ENCODE measurements at regions of chr10 and their contacts with region 1.

Region 1: GRCh38 chr10:31152421-31153135 is 120.9 kb upstream of the ZNF438 start:
- DNase-seq: no peak
- ATAC-seq: no peak
- H3K4me3 ChIP-seq: no peak overlapping the region
- H3K27ac ChIP-seq: no peak overlapping the region
- H3K4me1 ChIP-seq: no peaks in the 10 kb centered on the region
- H3K27me3 ChIP-seq: peaks cover 0 to 12% of the 10 kb centered on the region in 2 experiments; a peak in 2 of 5 replicates
- CTCF ChIP-seq: no peak
- EP300 ChIP-seq: no peak
- POLR2A ChIP-seq: no peak
- RAD21 ChIP-seq: no peak

Region 2: GRCh38 chr10:30893208-30893607 is 259.4 kb before region 1 on chr10:
- CTCF ChIA-PET with region 1: no interaction called
- POLR2A ChIA-PET with region 1: no interaction called
- in situ Hi-C with region 1: no loop called
- intact Hi-C with region 1: no loop called
- DNase-seq: no peak
- ATAC-seq: no peak
- H3K4me3 ChIP-seq: no peak overlapping the region
- H3K27ac ChIP-seq: no peak overlapping the region
- H3K4me1 ChIP-seq: no peaks in the 10 kb centered on the region
- H3K27me3 ChIP-seq: 0 out of 5 replicates have a peak, but pooled peaks cover 0 to 4% of the 10 kb centered on the region in 2 experiments
- CTCF ChIP-seq: no peak
- EP300 ChIP-seq: no peak
- POLR2A ChIP-seq: no peak
- RAD21 ChIP-seq: no peak

Region 3: GRCh38 chr10:31121757-31122577 is 30.6 kb before region 1 on chr10:
- CTCF ChIA-PET with region 1: no interaction called
- POLR2A ChIA-PET with region 1: no interaction called
- in situ Hi-C with region 1: no loop called
- intact Hi-C with region 1: loop called (anchors 1 kb)
- DNase-seq: no peak
- ATAC-seq: no peak
- H3K4me3 ChIP-seq: no peak overlapping the region
- H3K27ac ChIP-seq: no peak overlapping the region
- H3K4me1 ChIP-seq: no peaks in the 10 kb centered on the region
- H3K27me3 ChIP-seq: peaks cover 0 to 2% of the 10 kb centered on the region in 2 experiments; a peak in 1 of 5 replicates
- CTCF ChIP-seq: no peak
- EP300 ChIP-seq: no peak
- POLR2A ChIP-seq: no peak
- RAD21 ChIP-seq: no peak

Measured in HepG2 (cell line).